CD14-positive monocyte (primary cell): ENCODE measurements at regions of chr11 and their contacts with region 1.

Region 1: GRCh38 chr11:60363542-60364510 is 14.5 kb upstream of the MS4A7 start:
- DNase-seq: peak; percentile 81 to 92 (median 83)
- H3K4me3 ChIP-seq: peak overlapping the region; percentile 29 to 69 (median 44)
- H3K4me3 Mint-ChIP-seq: peak overlapping the region; percentile 68 to 85
- H3K27ac ChIP-seq: peak overlapping the region; percentile 91 to 97
- H3K27ac Mint-ChIP-seq: peak overlapping the region; percentile 96 to 100 (median 98)
- H3K4me1 ChIP-seq: peaks cover 55 to 62% of the 10 kb centered on the region in 2 donors
- H3K4me1 Mint-ChIP-seq: peaks cover 53% of the 10 kb centered on the region
- H3K27me3 ChIP-seq: no peaks in the 10 kb centered on the region
- H3K27me3 Mint-ChIP-seq: peaks cover 0 to 2% (median 0%) of the 10 kb centered on the region in 3 donors
- CTCF ChIP-seq: peak; percentile 83

Region 2: GRCh38 chr11:60377401-60378136 is 13.7 kb after region 1 on chr11:
- intact Hi-C with region 1: loop called in 1 of 2 experiments (anchors 2 kb)
- DNase-seq: peak; percentile 97 to 100 (median 97)
- H3K4me3 ChIP-seq: peak overlapping the region in 2 of 3 experiments; percentile 4 to 87
- H3K4me3 Mint-ChIP-seq: peak overlapping the region; percentile 76 to 94
- H3K27ac ChIP-seq: peak overlapping the region; percentile 95 to 99
- H3K27ac Mint-ChIP-seq: peak overlapping the region; percentile 97 to 100 (median 99)
- H3K4me1 ChIP-seq: peaks cover 52 to 76% of the 10 kb centered on the region in 2 donors
- H3K4me1 Mint-ChIP-seq: peaks cover 73% of the 10 kb centered on the region
- H3K27me3 ChIP-seq: no peaks in the 10 kb centered on the region
- H3K27me3 Mint-ChIP-seq: peaks cover 0 to 4% (median 0%) of the 10 kb centered on the region in 3 donors
- CTCF ChIP-seq: no peak

Region 3: GRCh38 chr11:60396799-60397198 is 33.0 kb after region 1 on chr11:
- intact Hi-C with region 1: loop called (anchors 5 kb)
- DNase-seq: peak; percentile 69 to 81 (median 77)
- H3K4me3 ChIP-seq: peak overlapping the region in 1 of 3 experiments; percentile 44
- H3K4me3 Mint-ChIP-seq: peak overlapping the region in 1 of 2 donors; percentile 64
- H3K27ac ChIP-seq: peak overlapping the region; percentile 56 to 90
- H3K27ac Mint-ChIP-seq: peak overlapping the region; percentile 90 to 96 (median 93)
- H3K4me1 ChIP-seq: peaks cover 55 to 64% of the 10 kb centered on the region in 2 donors
- H3K4me1 Mint-ChIP-seq: peaks cover 57% of the 10 kb centered on the region
- H3K27me3 ChIP-seq: no peaks in the 10 kb centered on the region
- H3K27me3 Mint-ChIP-seq: no peaks in the 10 kb centered on the region
- CTCF ChIP-seq: no peak

Region 4: GRCh38 chr11:60485986-60486385 is 122.2 kb after region 1 on chr11:
- intact Hi-C with region 1: loop called (anchors 5 kb)
- DNase-seq: peak; percentile 32 to 65 (median 55)
- H3K4me3 ChIP-seq: no peak overlapping the region
- H3K4me3 Mint-ChIP-seq: no peak overlapping the region
- H3K27ac ChIP-seq: no peak overlapping the region
- H3K27ac Mint-ChIP-seq: peak overlapping the region in 1 of 7 donors; percentile 54
- H3K4me1 ChIP-seq: peaks cover 21 to 26% of the 10 kb centered on the region in 2 donors
- H3K4me1 Mint-ChIP-seq: peaks cover 28% of the 10 kb centered on the region
- H3K27me3 ChIP-seq: no peaks in the 10 kb centered on the region
- H3K27me3 Mint-ChIP-seq: no peaks in the 10 kb centered on the region
- CTCF ChIP-seq: peak; percentile 80